ENCODE measurements at regions of chr13 and their contacts with region 1.

Region 1: GRCh38 chr13:97798836-97799235 is 154.6 kb upstream of the IPO5 start:
- DNase-seq: peak; percentile 15
- ATAC-seq: peak; percentile 59
- H3K4me3 ChIP-seq: no peak overlapping the region
- H3K27ac ChIP-seq: no peak overlapping the region
- H3K4me1 ChIP-seq: peaks cover 2% of the 10 kb centered on the region; the same call in 1 of the 2 replicates
- H3K27me3 ChIP-seq: peaks cover 9% of the 10 kb centered on the region
- CTCF ChIP-seq: no peak
- POLR2A ChIP-seq: no peak
- RAD21 ChIP-seq: no peak

Region 2: GRCh38 chr13:97574926-97575325 is 223.9 kb before region 1 on chr13:
- CTCF ChIA-PET with region 1: no interaction called
- POLR2A ChIA-PET with region 1: no interaction called
- dilution Hi-C with region 1: no loop called
- in situ Hi-C with region 1: no loop called
- intact Hi-C with region 1: loop called (anchors 10 kb)
- DNase-seq: peak; percentile 52
- ATAC-seq: peak; percentile 80
- H3K4me3 ChIP-seq: no peak overlapping the region
- H3K27ac ChIP-seq: no peak overlapping the region
- H3K4me1 ChIP-seq: peaks cover 2% of the 10 kb centered on the region; the same call in 1 of the 2 replicates
- H3K27me3 ChIP-seq: peaks cover 2% of the 10 kb centered on the region; the same call in 1 of the 2 replicates
- CTCF ChIP-seq: peak; percentile 55
- POLR2A ChIP-seq: no peak
- RAD21 ChIP-seq: peak; percentile 64

Region 3: GRCh38 chr13:97946951-97947588 is 148.2 kb after region 1 on chr13:
- CTCF ChIA-PET with region 1: no interaction called
- POLR2A ChIA-PET with region 1: no interaction called
- dilution Hi-C with region 1: no loop called
- in situ Hi-C with region 1: no loop called
- intact Hi-C with region 1: no loop called
- DNase-seq: peak; percentile 90
- ATAC-seq: peak; percentile 87
- H3K4me3 ChIP-seq: no peak overlapping the region
- H3K27ac ChIP-seq: peak overlapping the region; percentile 86
- H3K4me1 ChIP-seq: peaks cover 14% of the 10 kb centered on the region
- H3K27me3 ChIP-seq: no peaks in the 10 kb centered on the region
- CTCF ChIP-seq: no peak
- POLR2A ChIP-seq: no peak
- RAD21 ChIP-seq: no peak

Measured in IMR-90 (cell line).